CD14-positive monocyte (primary cell): ENCODE measurements at regions of chr1 and their contacts with region 1.

Region 1: GRCh38 chr1:44826375-44827196 is 16.5 kb downstream of the PTCH2 start:
- DNase-seq: peak; percentile 67 to 82 (median 81)
- H3K4me3 ChIP-seq: peak overlapping the region in 1 of 3 experiments; percentile 68
- H3K4me3 Mint-ChIP-seq: peak overlapping the region; percentile 66 to 83
- H3K27ac ChIP-seq: peak overlapping the region; percentile 29 to 67
- H3K27ac Mint-ChIP-seq: peak overlapping the region; percentile 67 to 91 (median 81)
- H3K4me1 ChIP-seq: peaks cover 30 to 44% of the 10 kb centered on the region in 2 donors
- H3K4me1 Mint-ChIP-seq: peaks cover 30% of the 10 kb centered on the region
- H3K27me3 ChIP-seq: no peaks in the 10 kb centered on the region
- H3K27me3 Mint-ChIP-seq: peaks cover 0 to 5% (median 0%) of the 10 kb centered on the region in 3 donors
- CTCF ChIP-seq: no peak

Region 2: GRCh38 chr1:44786138-44786840 is 40.3 kb before region 1 on chr1:
- intact Hi-C with region 1: loop called in 1 of 2 experiments (anchors 5 kb)
- DNase-seq: peak; percentile 60 to 70 (median 70)
- H3K4me3 ChIP-seq: peak overlapping the region in 2 of 3 experiments; percentile 41 to 74
- H3K4me3 Mint-ChIP-seq: peak overlapping the region; percentile 72 to 92
- H3K27ac ChIP-seq: no peak overlapping the region
- H3K27ac Mint-ChIP-seq: peak overlapping the region in 4 of 7 donors; percentile 31 to 85 (median 64)
- H3K4me1 ChIP-seq: peaks cover 23 to 24% of the 10 kb centered on the region in 2 donors
- H3K4me1 Mint-ChIP-seq: peaks cover 26% of the 10 kb centered on the region
- H3K27me3 ChIP-seq: peaks cover 0 to 3% of the 10 kb centered on the region in 2 donors
- H3K27me3 Mint-ChIP-seq: peaks cover 7 to 14% (median 12%) of the 10 kb centered on the region in 3 donors
- CTCF ChIP-seq: peak; percentile 100